CD4-positive, alpha-beta memory T cell (primary cell): ENCODE measurements at regions of chr14 and their contacts with region 1.

Region 1: GRCh38 chr14:91996948-91997371 is 42.9 kb downstream of the TRIP11 start:
- DNase-seq: peak in 4 of 5 donors; percentile 31 to 48 (median 42)
- H3K4me3 ChIP-seq: no peak overlapping the region
- H3K4me3 Mint-ChIP-seq: peak overlapping the region in 1 of 8 donors; percentile 25
- H3K27ac ChIP-seq: no peak overlapping the region
- H3K27ac Mint-ChIP-seq: peak overlapping the region in 5 of 7 donors; percentile 1 to 83 (median 49)
- H3K4me1 ChIP-seq: peaks cover 39% of the 10 kb centered on the region
- H3K4me1 Mint-ChIP-seq: peaks cover 28 to 42% (median 34%) of the 10 kb centered on the region in 4 donors
- H3K27me3 ChIP-seq: no peaks in the 10 kb centered on the region
- H3K27me3 Mint-ChIP-seq: no peaks in the 10 kb centered on the region

Region 2: DNA sequence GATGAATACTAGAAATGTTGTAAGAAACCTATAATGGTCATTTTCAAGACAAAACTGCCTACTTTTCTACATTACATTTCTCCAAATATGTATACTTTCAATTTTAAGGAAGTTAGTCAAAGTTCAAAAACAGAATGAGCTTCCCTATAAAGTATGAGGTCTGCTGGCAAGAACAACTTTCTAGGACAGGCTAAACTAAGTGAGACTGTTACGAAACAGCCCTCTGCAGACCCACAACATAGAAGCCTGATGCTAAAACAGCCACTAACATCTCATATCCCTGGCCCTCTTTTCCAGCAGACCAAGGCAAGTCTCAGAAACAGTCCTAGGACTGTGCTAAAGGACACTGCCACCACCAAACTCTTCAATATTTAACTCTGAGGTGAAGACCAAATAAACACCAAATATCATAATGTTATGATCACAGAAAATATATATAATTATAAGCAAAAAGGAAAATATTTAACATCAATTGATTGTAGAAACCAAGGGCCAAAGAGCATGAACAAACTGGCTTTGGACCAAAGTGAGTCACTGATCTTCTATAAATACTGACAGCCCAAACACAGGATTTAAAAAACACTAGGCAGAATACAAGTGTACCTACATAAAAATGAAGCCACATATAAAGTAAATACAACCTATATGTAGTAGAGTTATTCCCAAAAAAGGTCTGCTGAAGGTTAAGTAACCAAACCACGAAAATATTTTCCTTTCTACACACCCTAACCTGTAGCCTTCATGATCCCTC is 514.5 kb before region 1 on chr14:
- CTCF ChIA-PET with region 1: interaction called, 5 read pairs
- POLR2A ChIA-PET with region 1: no interaction called
- intact Hi-C with region 1: loop called (anchors 10 kb)
- DNase-seq: no peak
- H3K4me3 ChIP-seq: no peak overlapping the region
- H3K4me3 Mint-ChIP-seq: no peak overlapping the region
- H3K27ac ChIP-seq: no peak overlapping the region
- H3K27ac Mint-ChIP-seq: peak overlapping the region in 4 of 7 donors; percentile 24 to 57 (median 40)
- H3K4me1 ChIP-seq: peaks cover 34% of the 10 kb centered on the region
- H3K4me1 Mint-ChIP-seq: peaks cover 42 to 84% (median 56%) of the 10 kb centered on the region in 4 donors
- H3K27me3 ChIP-seq: no peaks in the 10 kb centered on the region
- H3K27me3 Mint-ChIP-seq: no peaks in the 10 kb centered on the region

Region 3: GRCh38 chr14:91649930-91650329 is 347.0 kb before region 1 on chr14:
- CTCF ChIA-PET with region 1: interaction called, 20 read pairs
- POLR2A ChIA-PET with region 1: no interaction called
- intact Hi-C with region 1: loop called (anchors 5 kb)
- DNase-seq: peak in 4 of 5 donors; percentile 9 to 43 (median 24)
- H3K4me3 ChIP-seq: no peak overlapping the region
- H3K4me3 Mint-ChIP-seq: no peak overlapping the region
- H3K27ac ChIP-seq: no peak overlapping the region
- H3K27ac Mint-ChIP-seq: no peak overlapping the region
- H3K4me1 ChIP-seq: no peaks in the 10 kb centered on the region
- H3K4me1 Mint-ChIP-seq: peaks cover 0 to 6% (median 2%) of the 10 kb centered on the region in 4 donors
- H3K27me3 ChIP-seq: no peaks in the 10 kb centered on the region
- H3K27me3 Mint-ChIP-seq: no peaks in the 10 kb centered on the region

Region 4: GRCh38 chr14:91977884-91978283 is 19.1 kb before region 1 on chr14:
- CTCF ChIA-PET with region 1: interaction called, 12 read pairs
- POLR2A ChIA-PET with region 1: interaction called, 3 read pairs
- intact Hi-C with region 1: no loop called
- DNase-seq: no peak
- H3K4me3 ChIP-seq: no peak overlapping the region
- H3K4me3 Mint-ChIP-seq: no peak overlapping the region
- H3K27ac ChIP-seq: no peak overlapping the region
- H3K27ac Mint-ChIP-seq: peak overlapping the region in 3 of 7 donors; percentile 50 to 72 (median 57)
- H3K4me1 ChIP-seq: no peaks in the 10 kb centered on the region
- H3K4me1 Mint-ChIP-seq: peaks cover 4 to 7% (median 6%) of the 10 kb centered on the region in 4 donors
- H3K27me3 ChIP-seq: no peaks in the 10 kb centered on the region
- H3K27me3 Mint-ChIP-seq: no peaks in the 10 kb centered on the region

Region 5: DNA sequence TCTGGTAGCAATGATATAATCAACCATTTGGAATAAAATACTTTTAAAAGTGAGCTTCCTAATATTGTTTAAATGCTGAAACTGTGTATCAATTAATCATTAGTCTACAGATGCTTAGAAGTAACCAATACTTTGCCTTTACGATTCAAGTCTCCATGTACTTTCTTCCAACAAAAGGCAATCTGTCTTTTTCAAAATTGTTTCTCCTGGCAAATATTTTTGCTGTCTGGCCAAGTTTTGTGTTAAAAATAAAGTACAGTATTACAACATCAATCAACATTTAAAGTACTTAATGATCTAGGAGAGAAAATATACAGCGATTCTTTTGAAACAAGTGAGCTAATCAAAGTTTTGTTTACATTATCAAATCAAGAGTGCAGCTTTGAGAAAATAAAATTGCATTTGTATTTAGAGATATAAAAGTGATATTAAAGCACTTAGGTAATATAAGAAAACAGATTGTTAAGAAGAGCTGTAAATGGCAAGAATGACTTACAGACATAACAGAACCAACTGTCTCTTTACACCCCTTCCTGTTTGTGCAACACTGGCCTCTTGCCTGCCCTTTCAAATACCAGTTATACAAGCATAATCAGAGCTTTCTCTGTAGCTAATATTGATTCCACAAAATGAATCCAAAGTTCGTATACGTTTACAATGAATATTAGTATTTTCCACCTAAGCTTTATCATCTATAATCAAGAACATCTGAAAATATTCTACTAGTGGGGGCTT is 11.3 kb before region 1 on chr14:
- CTCF ChIA-PET with region 1: interaction called, 25 read pairs
- POLR2A ChIA-PET with region 1: no interaction called
- intact Hi-C with region 1: no loop called
- DNase-seq: no peak
- H3K4me3 ChIP-seq: no peak overlapping the region
- H3K4me3 Mint-ChIP-seq: no peak overlapping the region
- H3K27ac ChIP-seq: no peak overlapping the region
- H3K27ac Mint-ChIP-seq: no peak overlapping the region
- H3K4me1 ChIP-seq: no peaks in the 10 kb centered on the region
- H3K4me1 Mint-ChIP-seq: peaks cover 0 to 14% (median 10%) of the 10 kb centered on the region in 4 donors
- H3K27me3 ChIP-seq: no peaks in the 10 kb centered on the region
- H3K27me3 Mint-ChIP-seq: no peaks in the 10 kb centered on the region